CD4-positive, alpha-beta T cell (primary cell): ENCODE measurements at regions of chr5 and their contacts with region 1.

Region 1: DNA sequence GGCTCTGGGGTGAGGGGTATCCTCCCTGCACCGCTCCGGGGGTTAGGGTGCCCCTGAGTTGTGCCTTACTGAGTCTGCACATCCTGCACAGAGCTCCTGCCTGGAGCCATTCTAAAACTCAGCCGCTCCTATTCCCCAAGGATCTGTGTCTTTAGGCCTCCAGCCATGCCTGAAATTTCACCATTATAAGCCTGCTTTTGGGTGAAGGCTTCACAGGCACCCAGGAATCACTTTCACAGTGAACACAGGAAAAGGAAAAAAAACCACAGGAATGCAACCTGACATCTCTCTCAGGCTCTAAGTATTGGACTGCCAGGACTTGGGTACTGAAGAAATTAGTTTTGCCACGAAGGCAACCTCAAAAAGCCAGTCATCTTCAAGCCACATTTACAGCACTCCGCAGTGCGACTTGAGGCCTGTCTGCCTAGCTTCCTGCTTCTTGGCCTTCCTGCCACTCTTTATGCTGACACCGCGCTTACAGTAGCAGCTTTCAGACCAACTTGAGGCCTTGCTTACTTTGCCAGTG is 30.9 kb downstream of the GALNT10 start:
- DNase-seq: peak; percentile 36 to 80 (median 54)
- ATAC-seq: peak; percentile 98
- H3K4me3 ChIP-seq: no peak overlapping the region
- H3K4me3 Mint-ChIP-seq: peak overlapping the region; percentile 16
- H3K27ac ChIP-seq: peak overlapping the region in 1 of 2 donors; percentile 69
- H3K27ac Mint-ChIP-seq: peak overlapping the region; percentile 90
- H3K4me1 ChIP-seq: peaks cover 18% of the 10 kb centered on the region
- H3K4me1 Mint-ChIP-seq: peaks cover 62% of the 10 kb centered on the region
- H3K27me3 ChIP-seq: no peaks in the 10 kb centered on the region
- H3K27me3 Mint-ChIP-seq: no peaks in the 10 kb centered on the region
- CTCF ChIP-seq: no peak

Region 2: DNA sequence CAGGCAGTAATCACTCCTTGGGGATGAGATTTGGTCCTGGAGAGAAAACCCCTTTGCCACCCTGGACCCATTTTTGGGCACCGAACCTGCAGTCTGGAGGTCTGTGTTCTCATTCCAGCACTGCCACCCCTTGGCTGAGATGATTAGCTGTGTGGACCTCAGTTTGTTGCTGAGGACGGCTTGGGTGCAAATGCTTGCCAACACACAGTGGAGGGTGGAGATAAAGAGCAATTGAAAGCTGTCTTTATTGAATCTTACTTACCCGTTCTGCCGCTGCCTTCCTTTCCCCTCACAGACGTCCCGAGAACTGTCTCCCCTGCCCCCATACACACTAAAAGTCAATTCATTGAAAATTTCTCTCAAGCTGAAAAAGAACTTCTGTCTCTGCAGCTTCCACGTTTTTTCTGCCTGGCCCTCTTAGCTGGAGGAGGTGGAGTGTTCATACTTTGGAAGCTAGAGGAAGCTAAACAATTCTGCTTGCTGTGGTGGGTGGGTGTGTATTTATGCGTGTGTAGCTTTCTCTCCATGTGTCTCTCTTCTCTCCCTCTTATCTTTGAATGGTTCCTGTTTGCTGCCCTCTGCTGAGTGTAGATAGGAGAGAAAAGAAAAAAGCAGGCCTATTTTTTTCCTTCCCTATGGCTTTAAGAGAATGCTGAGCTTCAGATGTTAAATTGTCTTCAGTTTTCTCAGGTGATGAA is 24.3 kb before region 1 on chr5:
- CTCF ChIA-PET with region 1: interaction called, 3 read pairs
- POLR2A ChIA-PET with region 1: interaction called, 23 read pairs
- intact Hi-C with region 1: no loop called
- DNase-seq: peak in 4 of 14 experiments; percentile 17 to 47 (median 44)
- ATAC-seq: peak; percentile 55
- H3K4me3 ChIP-seq: no peak overlapping the region
- H3K4me3 Mint-ChIP-seq: peak overlapping the region; percentile 37
- H3K27ac ChIP-seq: peak overlapping the region in 1 of 2 donors; percentile 68
- H3K27ac Mint-ChIP-seq: peak overlapping the region; percentile 89
- H3K4me1 ChIP-seq: peaks cover 58% of the 10 kb centered on the region
- H3K4me1 Mint-ChIP-seq: peaks cover 62% of the 10 kb centered on the region
- H3K27me3 ChIP-seq: no peaks in the 10 kb centered on the region
- H3K27me3 Mint-ChIP-seq: no peaks in the 10 kb centered on the region
- CTCF ChIP-seq: peak; percentile 45